ENCODE measurements at regions of chr6 and their contacts with region 1.

Region 1: GRCh38 chr6:148464319-148465010 is 121.8 kb downstream of the SASH1 start:
- DNase-seq: peak; percentile 53 to 63
- H3K4me3 ChIP-seq: no peak overlapping the region
- H3K27ac ChIP-seq: no peak overlapping the region
- H3K4me1 ChIP-seq: peaks cover 7% of the 10 kb centered on the region
- H3K27me3 ChIP-seq: no peaks in the 10 kb centered on the region
- CTCF ChIP-seq: peak; percentile 96

Region 2: GRCh38 chr6:147390909-147391536 is 1073.4 kb before region 1 on chr6:
- CTCF ChIA-PET with region 1: no interaction called
- POLR2A ChIA-PET with region 1: no interaction called
- intact Hi-C with region 1: loop called (anchors 10 kb)
- DNase-seq: peak in 1 of 2 experiments; percentile 4
- H3K4me3 ChIP-seq: no peak overlapping the region
- H3K27ac ChIP-seq: no peak overlapping the region
- H3K4me1 ChIP-seq: no peaks in the 10 kb centered on the region
- H3K27me3 ChIP-seq: no peaks in the 10 kb centered on the region
- CTCF ChIP-seq: peak; percentile 68

Region 3: GRCh38 chr6:148177589-148178233 is 286.8 kb before region 1 on chr6:
- CTCF ChIA-PET with region 1: no interaction called
- POLR2A ChIA-PET with region 1: no interaction called
- intact Hi-C with region 1: loop called (anchors 2 kb)
- DNase-seq: no peak
- H3K4me3 ChIP-seq: no peak overlapping the region
- H3K27ac ChIP-seq: no peak overlapping the region
- H3K4me1 ChIP-seq: no peaks in the 10 kb centered on the region
- H3K27me3 ChIP-seq: no peaks in the 10 kb centered on the region
- CTCF ChIP-seq: peak; percentile 71

Region 4: GRCh38 chr6:148608199-148608951 is 143.9 kb after region 1 on chr6:
- CTCF ChIA-PET with region 1: no interaction called
- POLR2A ChIA-PET with region 1: no interaction called
- intact Hi-C with region 1: no loop called
- DNase-seq: no peak
- H3K4me3 ChIP-seq: no peak overlapping the region
- H3K27ac ChIP-seq: no peak overlapping the region
- H3K4me1 ChIP-seq: no peaks in the 10 kb centered on the region
- H3K27me3 ChIP-seq: peaks cover 4% of the 10 kb centered on the region; the same call in 1 of the 2 replicates
- CTCF ChIP-seq: peak; percentile 55

Measured in PC-9 (cell line).